Calu3 (cell line): ENCODE measurements at regions of chr1 and their contacts with region 1.

Region 1: GRCh38 chr1:202112839-202113672 is 9.7 kb upstream of the GPR37L1 start:
- DNase-seq: peak; percentile 75
- H3K4me3 Mint-ChIP-seq: peak overlapping the region; percentile 19
- H3K27ac Mint-ChIP-seq: peak overlapping the region; percentile 94
- H3K4me1 Mint-ChIP-seq: peaks cover 47% of the 10 kb centered on the region
- H3K27me3 Mint-ChIP-seq: no peaks in the 10 kb centered on the region
- CTCF ChIP-seq: no peak

Region 2: DNA sequence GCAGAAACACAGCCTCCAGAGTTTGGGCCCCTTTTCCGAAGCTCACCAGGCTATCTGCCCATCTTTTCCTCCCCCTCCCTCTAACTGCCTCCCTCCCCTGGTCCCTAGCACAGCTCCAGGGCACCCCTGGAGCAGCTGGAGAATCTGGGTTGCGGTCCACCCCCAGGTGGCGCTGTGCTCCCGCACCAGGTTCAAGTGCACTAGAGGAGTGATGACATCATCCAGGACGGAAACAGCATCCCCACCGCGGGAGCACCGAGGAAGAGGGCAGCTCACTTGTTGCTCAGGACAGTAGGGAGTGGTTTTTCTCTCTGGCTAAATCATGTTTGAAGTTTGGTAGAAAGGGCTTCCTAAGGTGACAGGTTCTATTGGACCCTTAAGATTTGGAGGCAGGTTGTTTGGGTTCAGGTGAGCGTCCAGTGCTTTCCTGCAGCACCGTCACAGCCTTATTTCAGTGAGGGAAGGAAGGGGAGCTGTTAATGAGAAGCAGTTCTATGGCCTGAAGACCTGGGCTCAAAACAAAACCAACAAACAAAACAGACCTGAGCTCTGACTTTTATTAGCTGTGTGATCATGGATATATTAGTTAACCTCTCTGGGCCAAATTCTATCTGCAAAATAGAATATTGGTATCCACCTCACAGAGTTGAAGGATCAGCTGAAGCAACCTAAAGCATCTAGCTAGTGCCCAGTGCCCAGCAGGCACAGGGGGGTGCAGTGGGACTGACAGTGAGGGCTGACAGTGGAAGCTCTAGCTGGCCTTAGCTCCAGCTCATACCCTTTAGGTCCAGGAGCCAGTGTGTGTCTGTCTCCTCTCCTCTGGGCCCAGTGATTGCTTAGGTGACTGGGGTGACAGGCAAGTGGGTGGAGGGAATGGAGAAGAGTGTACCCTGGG is 216.9 kb before region 1 on chr1:
- CTCF ChIA-PET with region 1: interaction called, 10 read pairs
- intact Hi-C with region 1: loop called (anchors 5 kb)
- DNase-seq: peak; percentile 97
- H3K4me3 Mint-ChIP-seq: no peak overlapping the region
- H3K27ac Mint-ChIP-seq: no peak overlapping the region
- H3K4me1 Mint-ChIP-seq: peaks cover 10% of the 10 kb centered on the region
- H3K27me3 Mint-ChIP-seq: peaks cover 16% of the 10 kb centered on the region
- CTCF ChIP-seq: peak; percentile 96

Region 3: GRCh38 chr1:201925981-201926645 is 186.9 kb before region 1 on chr1:
- CTCF ChIA-PET with region 1: no interaction called
- intact Hi-C with region 1: no loop called
- DNase-seq: no peak
- H3K4me3 Mint-ChIP-seq: no peak overlapping the region
- H3K27ac Mint-ChIP-seq: no peak overlapping the region
- H3K4me1 Mint-ChIP-seq: peaks cover 9% of the 10 kb centered on the region
- H3K27me3 Mint-ChIP-seq: no peaks in the 10 kb centered on the region
- CTCF ChIP-seq: no peak

Region 4: GRCh38 chr1:201999625-202000238 is 113.3 kb before region 1 on chr1:
- CTCF ChIA-PET with region 1: interaction called, 29 read pairs
- intact Hi-C with region 1: no loop called
- DNase-seq: peak; percentile 65
- H3K4me3 Mint-ChIP-seq: no peak overlapping the region
- H3K27ac Mint-ChIP-seq: no peak overlapping the region
- H3K4me1 Mint-ChIP-seq: no peaks in the 10 kb centered on the region
- H3K27me3 Mint-ChIP-seq: no peaks in the 10 kb centered on the region
- CTCF ChIP-seq: peak; percentile 85

Region 5: GRCh38 chr1:202009326-202010179 is 103.5 kb before region 1 on chr1:
- CTCF ChIA-PET with region 1: interaction called, 47 read pairs
- intact Hi-C with region 1: loop called (anchors 2 kb)
- DNase-seq: peak; percentile 91
- H3K4me3 Mint-ChIP-seq: peak overlapping the region; percentile 92
- H3K27ac Mint-ChIP-seq: peak overlapping the region; percentile 89
- H3K4me1 Mint-ChIP-seq: peaks cover 48% of the 10 kb centered on the region
- H3K27me3 Mint-ChIP-seq: no peaks in the 10 kb centered on the region
- CTCF ChIP-seq: peak; percentile 85

Region 6: DNA sequence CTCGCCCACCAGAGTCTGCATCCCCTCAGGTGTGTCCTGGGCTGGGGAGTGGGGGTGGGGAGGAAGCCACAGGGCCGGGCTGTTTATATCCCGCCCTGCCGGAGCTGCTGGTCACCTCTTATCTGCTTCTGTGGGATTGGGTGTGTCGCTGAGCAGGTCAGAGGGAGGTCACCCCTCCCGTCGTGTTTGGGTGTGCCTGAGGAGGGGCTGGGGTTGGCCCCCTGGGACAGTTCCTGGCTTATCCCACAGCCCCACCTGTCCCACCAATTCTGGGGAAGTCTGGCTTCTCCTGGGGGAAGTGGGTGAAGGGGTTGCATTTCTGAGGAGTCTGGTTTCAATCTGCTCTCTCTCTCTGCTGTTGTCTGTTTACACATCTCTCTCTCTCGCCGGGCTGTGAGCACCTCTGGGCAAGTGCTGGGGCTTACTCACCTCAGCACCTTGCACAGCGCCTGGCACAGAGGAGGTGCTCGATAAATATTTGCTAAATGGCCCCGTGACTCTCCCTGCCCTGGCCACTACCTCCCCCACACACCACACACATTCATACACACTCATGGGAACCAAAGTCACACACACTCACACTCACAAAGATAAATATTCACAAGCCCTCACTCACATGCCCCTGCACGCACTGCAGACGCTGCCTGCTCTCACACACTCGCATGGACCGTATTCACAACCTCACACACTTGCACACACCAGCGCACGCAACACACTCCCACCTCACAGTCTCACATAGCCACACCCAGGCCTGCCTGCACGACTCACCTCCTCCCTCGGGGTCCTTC is 94.4 kb before region 1 on chr1:
- CTCF ChIA-PET with region 1: interaction called, 27 read pairs
- intact Hi-C with region 1: no loop called
- DNase-seq: peak; percentile 95
- H3K4me3 Mint-ChIP-seq: peak overlapping the region; percentile 92
- H3K27ac Mint-ChIP-seq: peak overlapping the region; percentile 89
- H3K4me1 Mint-ChIP-seq: peaks cover 78% of the 10 kb centered on the region
- H3K27me3 Mint-ChIP-seq: no peaks in the 10 kb centered on the region
- CTCF ChIP-seq: no peak

Region 7: DNA sequence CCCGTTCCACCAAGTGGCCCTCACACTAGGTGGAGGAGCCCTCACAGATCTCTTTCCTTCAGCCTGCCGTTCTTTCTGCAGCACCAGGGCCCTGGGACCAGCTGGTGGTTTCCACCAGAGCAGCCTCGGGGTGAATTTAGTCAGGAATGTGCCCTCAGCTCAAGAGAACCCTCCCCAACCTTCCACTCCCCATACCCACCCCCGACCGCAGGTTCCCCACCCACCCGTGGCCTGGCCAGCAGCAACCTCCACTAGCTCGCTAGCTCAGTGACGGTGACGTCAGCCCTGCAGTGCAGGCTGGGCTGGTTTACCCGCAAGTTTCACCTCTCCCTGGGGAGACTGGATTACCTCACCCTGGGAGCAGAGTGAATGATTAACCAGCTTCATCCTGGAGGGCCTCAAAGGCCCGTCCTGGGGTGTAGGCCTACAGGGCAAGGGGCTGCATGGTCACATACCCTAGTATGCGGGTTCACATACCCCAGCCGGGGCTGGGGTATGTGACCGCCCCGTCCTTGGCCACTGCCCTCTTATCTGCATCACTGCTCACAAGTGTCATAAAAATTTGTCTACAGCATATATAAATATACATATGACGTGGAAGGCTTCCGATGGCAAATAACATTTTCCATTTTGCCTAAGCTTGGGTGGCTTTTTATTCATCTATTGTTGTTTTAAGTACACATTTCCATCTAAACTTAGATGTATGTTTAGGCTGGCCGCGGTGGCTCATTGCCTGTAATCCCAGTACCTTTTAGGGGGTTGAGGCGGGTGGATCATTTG is 78.2 kb before region 1 on chr1:
- CTCF ChIA-PET with region 1: interaction called, 10 read pairs
- intact Hi-C with region 1: no loop called
- DNase-seq: peak; percentile 99
- H3K4me3 Mint-ChIP-seq: peak overlapping the region; percentile 46
- H3K27ac Mint-ChIP-seq: peak overlapping the region; percentile 97
- H3K4me1 Mint-ChIP-seq: peaks cover 75% of the 10 kb centered on the region
- H3K27me3 Mint-ChIP-seq: no peaks in the 10 kb centered on the region
- CTCF ChIP-seq: no peak

Region 8: DNA sequence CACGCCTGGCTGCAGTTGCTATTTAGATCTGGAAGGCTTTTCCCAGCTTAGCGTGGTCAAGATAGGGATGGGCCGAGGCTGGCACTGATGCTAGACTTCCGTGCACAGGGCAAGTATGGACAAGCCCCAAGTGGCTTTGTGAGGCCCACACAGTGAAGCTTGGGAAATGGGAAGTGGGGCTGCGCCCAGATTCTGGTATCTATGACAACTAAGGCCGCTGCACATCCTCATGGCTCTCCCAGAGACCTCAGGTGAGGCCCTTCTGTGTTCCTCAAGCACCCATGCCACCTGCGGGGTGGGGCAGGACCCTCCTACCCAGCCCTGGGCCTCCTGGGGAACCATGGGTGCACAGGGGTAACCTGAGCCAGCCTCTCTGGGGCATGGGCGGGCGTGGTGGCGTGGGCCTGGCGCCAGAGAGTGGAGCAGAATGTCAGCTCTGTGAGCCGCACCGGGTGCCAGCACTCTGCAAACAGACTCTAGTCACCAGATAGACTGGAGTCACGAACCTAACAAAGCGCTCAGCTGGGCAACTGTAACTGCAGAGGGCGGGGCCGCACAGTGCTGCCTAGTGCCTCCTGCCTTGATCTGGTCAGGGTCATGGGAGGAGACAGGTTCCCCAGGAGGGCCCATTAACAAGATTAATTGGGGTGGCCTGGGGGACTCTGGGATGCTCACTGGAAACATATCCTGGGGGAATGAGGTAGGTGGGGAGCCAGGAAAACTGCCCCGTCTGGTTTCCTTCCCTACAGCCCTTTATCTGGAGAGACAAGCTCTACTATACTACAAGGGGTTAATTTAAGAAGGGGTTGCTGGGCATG is 56.2 kb before region 1 on chr1:
- CTCF ChIA-PET with region 1: interaction called, 6 read pairs
- intact Hi-C with region 1: loop called (anchors 2 kb)
- DNase-seq: peak; percentile 96
- H3K4me3 Mint-ChIP-seq: peak overlapping the region; percentile 4
- H3K27ac Mint-ChIP-seq: peak overlapping the region; percentile 66
- H3K4me1 Mint-ChIP-seq: peaks cover 55% of the 10 kb centered on the region
- H3K27me3 Mint-ChIP-seq: no peaks in the 10 kb centered on the region
- CTCF ChIP-seq: no peak